ENCODE measurements at regions of chr5 and their contacts with region 1.

Region 1: GRCh38 chr5:59039296-59040023 is 456.6 kb downstream of the RAB3C start:
- DNase-seq: peak; percentile 91
- ATAC-seq: peak; percentile 76 to 86

Region 2: DNA sequence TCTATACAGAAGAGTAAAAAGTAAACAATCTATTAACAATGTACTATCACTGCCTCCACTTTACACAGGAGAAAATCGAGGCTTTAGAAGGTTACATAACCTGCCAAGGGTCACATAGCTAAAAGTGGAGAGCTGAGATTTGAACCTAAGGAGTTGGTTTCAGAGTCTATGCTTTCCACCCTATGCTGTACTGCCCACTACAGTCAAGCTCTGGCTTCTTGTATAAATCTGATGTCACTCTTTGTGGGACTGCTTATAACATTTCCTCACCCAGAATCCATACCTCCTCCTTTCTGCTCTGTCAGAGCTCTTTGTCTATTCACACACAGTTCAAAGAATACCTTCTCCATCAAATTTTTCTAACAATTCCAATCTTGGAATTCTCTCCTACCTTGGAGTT is 46.6 kb after region 1 on chr5:
- intact Hi-C with region 1: loop called in 1 of 2 experiments (anchors 5 kb)
- DNase-seq: no peak
- ATAC-seq: no peak

Region 3: DNA sequence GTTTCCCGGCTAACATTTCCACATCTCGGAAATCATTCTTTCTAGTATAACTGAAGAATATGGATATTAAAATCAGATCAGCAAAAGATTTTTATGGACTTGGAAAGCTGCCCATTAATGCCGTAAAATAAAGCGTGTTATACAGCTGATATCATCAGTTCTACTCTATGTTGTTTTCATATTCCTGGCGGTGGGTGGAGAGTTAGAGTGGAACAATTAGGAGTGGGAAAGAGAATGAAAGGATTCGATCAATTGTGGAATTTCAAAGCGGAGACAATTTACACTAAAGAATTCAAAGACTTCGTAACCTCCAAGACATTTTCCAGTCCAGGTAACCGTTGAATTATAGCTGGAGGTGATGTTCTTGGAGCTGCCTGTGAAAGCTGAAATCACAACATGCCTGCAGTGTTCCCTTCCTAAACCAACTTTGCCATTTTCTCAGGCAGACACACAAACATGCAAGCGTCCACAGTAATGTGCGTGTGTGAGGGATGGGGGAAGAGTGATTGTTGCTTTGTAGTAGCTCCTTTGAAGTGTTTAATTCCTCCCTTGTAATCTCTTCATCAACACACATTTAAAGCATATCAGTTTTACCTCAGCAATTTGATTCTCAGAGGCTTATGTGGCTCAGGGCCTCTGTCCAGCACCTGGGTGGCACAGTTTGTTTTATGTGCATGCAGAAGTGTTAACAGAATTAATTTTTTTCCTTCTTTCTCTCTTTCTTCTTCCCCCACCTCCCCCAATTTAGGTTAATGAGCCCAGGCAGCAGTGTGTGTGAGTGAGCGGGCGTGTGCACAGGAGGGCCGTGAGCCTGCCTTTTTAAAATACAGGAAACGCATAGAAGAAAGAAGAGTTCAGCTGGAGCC is 87.5 kb after region 1 on chr5:
- intact Hi-C with region 1: loop called (anchors 1 to 5 kb)
- DNase-seq: no peak
- ATAC-seq: peak in 1 of 2 donors; percentile 2